ENCODE measurements at regions of chr9 and their contacts with region 1.

Region 1: DNA sequence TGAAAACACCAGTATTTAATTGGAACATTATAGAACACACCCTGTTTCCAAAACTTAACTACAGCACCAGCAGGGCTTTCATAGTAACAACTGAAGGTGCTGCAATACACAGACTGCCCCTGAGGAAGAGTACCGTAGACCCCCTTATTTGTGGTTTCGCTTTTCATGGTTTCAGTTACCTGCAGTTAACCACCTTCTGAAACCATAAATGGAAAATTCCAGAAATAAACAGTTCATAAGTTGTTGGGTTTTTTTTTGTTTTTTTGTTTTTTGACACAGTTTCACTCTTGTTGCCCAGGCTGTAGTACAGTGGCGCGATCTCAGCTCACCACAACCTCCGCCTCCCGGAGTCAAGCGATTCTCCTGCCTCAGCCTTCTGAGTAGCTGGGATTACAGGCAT is 9.5 kb upstream of the GLDC start:
- DNase-seq: no peak
- ATAC-seq: no peak
- H3K4me3 ChIP-seq: no peak overlapping the region
- H3K27ac ChIP-seq: no peak overlapping the region
- H3K4me1 ChIP-seq: no peaks in the 10 kb centered on the region
- H3K27me3 ChIP-seq: peaks cover 0 to 9% (median 0%) of the 10 kb centered on the region in 9 donors
- CTCF ChIP-seq: no peak
- POLR2A ChIP-seq: no peak

Region 2: DNA sequence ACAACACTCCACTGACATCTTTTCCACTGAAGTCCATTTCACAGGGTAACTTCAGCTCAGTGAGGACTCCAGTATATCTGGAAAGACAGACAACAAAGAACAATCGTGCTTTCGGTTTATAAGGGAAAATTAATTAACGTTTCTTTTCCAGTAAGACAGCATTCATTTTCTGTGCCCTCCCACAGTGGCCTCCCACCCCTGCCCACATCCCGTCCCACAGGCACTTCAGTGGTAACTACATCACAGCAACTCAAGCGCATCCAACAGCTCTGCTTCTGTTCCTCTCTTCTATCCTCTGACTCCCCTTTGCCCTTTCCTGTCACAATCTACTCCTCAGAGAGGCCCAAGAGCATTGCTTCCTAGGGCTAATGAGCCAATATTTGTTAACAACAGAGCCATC is 49.8 kb before region 1 on chr9:
- intact Hi-C with region 1: loop called in 1 of 10 experiments (anchors 10 kb)
- DNase-seq: no peak
- ATAC-seq: no peak
- H3K4me3 ChIP-seq: no peak overlapping the region
- H3K27ac ChIP-seq: no peak overlapping the region
- H3K4me1 ChIP-seq: no peaks in the 10 kb centered on the region
- H3K27me3 ChIP-seq: no peaks in the 10 kb centered on the region
- CTCF ChIP-seq: no peak
- POLR2A ChIP-seq: no peak

Region 3: GRCh38 chr9:6616951-6617602 is 38.0 kb before region 1 on chr9:
- intact Hi-C with region 1: no loop called
- DNase-seq: no peak
- ATAC-seq: no peak
- H3K4me3 ChIP-seq: no peak overlapping the region
- H3K27ac ChIP-seq: no peak overlapping the region
- H3K4me1 ChIP-seq: no peaks in the 10 kb centered on the region
- H3K27me3 ChIP-seq: no peaks in the 10 kb centered on the region
- CTCF ChIP-seq: no peak
- POLR2A ChIP-seq: no peak

Measured in heart left ventricle (tissue), 16 donors.